ENCODE measurements at regions of chr13 and their contacts with region 1.

Region 1: DNA sequence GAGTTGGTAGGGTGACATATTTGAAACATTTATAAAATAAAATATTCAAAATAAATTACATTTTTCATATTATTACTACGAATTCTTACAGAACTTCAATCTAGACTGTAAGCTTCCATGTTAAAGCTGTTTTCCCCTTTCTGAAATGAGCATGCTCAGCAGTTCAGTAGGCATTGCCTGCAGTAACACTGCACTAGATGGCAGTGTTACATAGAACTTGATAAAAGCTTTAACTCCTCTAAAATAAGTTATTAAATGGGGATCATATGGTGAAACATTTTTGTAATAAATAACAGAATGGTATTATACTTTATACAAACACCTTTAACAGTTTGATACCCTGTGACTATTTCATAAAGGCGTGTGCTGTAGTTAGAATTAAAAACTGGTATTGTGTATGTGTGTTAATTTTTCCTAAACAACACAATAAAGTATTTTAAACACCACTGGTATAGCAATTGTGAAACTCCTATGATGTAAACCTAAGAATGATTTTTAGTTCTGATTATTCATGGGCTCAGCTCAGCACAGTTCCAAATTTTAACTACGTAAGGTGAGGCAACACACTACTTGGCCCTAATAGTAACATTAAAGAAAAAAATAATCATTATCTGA is 11.6 kb upstream of the GPR18 start:
- DNase-seq: peak; percentile 57 to 71 (median 63)
- H3K4me3 ChIP-seq: no peak overlapping the region
- H3K4me3 Mint-ChIP-seq: peak overlapping the region in 2 of 8 donors; percentile 53 to 67
- H3K27ac ChIP-seq: peak overlapping the region; percentile 42
- H3K27ac Mint-ChIP-seq: peak overlapping the region; percentile 23 to 98 (median 92)
- H3K4me1 ChIP-seq: peaks cover 59% of the 10 kb centered on the region
- H3K4me1 Mint-ChIP-seq: peaks cover 43 to 72% (median 58%) of the 10 kb centered on the region in 4 donors
- H3K27me3 ChIP-seq: no peaks in the 10 kb centered on the region
- H3K27me3 Mint-ChIP-seq: no peaks in the 10 kb centered on the region

Region 2: GRCh38 chr13:97539651-97540610 is 1729.8 kb before region 1 on chr13:
- CTCF ChIA-PET with region 1: no interaction called
- POLR2A ChIA-PET with region 1: no interaction called
- intact Hi-C with region 1: no loop called
- DNase-seq: no peak
- H3K4me3 ChIP-seq: no peak overlapping the region
- H3K4me3 Mint-ChIP-seq: no peak overlapping the region
- H3K27ac ChIP-seq: no peak overlapping the region
- H3K27ac Mint-ChIP-seq: no peak overlapping the region
- H3K4me1 ChIP-seq: no peaks in the 10 kb centered on the region
- H3K4me1 Mint-ChIP-seq: no peaks in the 10 kb centered on the region
- H3K27me3 ChIP-seq: no peaks in the 10 kb centered on the region
- H3K27me3 Mint-ChIP-seq: peaks cover 1% of the 10 kb centered on the region in 2 donors

Region 3: GRCh38 chr13:99035715-99036114 is 234.0 kb before region 1 on chr13:
- CTCF ChIA-PET with region 1: no interaction called
- POLR2A ChIA-PET with region 1: no interaction called
- intact Hi-C with region 1: no loop called
- DNase-seq: no peak
- H3K4me3 ChIP-seq: no peak overlapping the region
- H3K4me3 Mint-ChIP-seq: peak overlapping the region in 1 of 8 donors; percentile 3
- H3K27ac ChIP-seq: no peak overlapping the region
- H3K27ac Mint-ChIP-seq: peak overlapping the region in 1 of 7 donors; percentile 30
- H3K4me1 ChIP-seq: peaks cover 25% of the 10 kb centered on the region
- H3K4me1 Mint-ChIP-seq: peaks cover 28 to 72% (median 49%) of the 10 kb centered on the region in 4 donors
- H3K27me3 ChIP-seq: no peaks in the 10 kb centered on the region
- H3K27me3 Mint-ChIP-seq: no peaks in the 10 kb centered on the region

Region 4: DNA sequence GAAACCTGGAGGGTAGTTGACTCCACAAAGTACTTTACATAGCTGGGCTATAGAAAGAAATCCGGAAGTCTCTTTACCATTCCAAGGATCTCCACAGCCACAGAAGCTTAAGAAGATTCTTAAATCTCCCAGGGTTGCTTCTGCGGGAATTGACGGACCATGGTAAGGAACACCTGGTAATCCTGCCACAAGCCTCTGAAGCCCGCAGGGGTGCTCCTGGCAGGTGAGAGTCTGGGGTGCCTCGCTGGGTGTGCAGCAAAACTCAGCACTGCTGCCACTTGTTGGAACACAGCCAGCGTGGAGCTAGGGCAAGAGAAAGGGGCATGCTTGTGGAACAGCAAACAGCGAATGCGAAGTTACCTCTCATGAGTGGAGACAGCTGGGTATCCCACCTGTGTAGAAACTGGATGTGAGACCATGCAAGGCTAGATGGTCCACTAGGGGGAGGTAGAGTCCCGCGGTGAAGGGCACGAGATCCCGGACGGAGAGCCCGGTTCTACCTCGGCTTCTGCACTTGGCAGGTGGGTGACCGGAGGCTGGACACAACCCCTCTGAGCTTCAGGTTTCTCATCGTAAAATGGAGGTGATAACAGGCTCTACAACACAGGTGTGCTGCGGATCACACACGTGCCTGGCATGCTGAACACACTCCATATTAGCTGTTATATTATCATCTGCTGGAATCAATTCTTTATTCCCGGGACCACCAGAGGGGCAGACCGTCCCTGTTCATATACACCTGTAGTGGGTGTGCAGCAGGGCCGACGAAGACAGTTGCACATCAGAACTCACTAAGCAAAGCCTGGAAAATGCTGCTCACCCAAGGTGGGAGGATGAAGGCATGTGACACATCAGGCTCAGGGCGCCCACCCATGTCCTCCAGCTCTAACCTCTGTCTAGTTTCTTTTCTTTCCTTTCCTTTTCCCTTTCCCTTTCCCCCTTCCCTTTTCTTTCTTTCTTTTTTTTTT is 93.1 kb before region 1 on chr13:
- CTCF ChIA-PET with region 1: interaction called, 567 read pairs
- POLR2A ChIA-PET with region 1: interaction called, 12 read pairs
- intact Hi-C with region 1: loop called (anchors 1 kb)
- DNase-seq: peak; percentile 69 to 79 (median 75)
- H3K4me3 ChIP-seq: peak overlapping the region in 1 of 2 donors; percentile 19
- H3K4me3 Mint-ChIP-seq: peak overlapping the region in 7 of 8 donors; percentile 62 to 80 (median 71)
- H3K27ac ChIP-seq: no peak overlapping the region
- H3K27ac Mint-ChIP-seq: peak overlapping the region in 6 of 7 donors; percentile 37 to 81 (median 68)
- H3K4me1 ChIP-seq: peaks cover 44% of the 10 kb centered on the region
- H3K4me1 Mint-ChIP-seq: peaks cover 32 to 43% (median 36%) of the 10 kb centered on the region in 4 donors
- H3K27me3 ChIP-seq: no peaks in the 10 kb centered on the region
- H3K27me3 Mint-ChIP-seq: no peaks in the 10 kb centered on the region

Region 5: DNA sequence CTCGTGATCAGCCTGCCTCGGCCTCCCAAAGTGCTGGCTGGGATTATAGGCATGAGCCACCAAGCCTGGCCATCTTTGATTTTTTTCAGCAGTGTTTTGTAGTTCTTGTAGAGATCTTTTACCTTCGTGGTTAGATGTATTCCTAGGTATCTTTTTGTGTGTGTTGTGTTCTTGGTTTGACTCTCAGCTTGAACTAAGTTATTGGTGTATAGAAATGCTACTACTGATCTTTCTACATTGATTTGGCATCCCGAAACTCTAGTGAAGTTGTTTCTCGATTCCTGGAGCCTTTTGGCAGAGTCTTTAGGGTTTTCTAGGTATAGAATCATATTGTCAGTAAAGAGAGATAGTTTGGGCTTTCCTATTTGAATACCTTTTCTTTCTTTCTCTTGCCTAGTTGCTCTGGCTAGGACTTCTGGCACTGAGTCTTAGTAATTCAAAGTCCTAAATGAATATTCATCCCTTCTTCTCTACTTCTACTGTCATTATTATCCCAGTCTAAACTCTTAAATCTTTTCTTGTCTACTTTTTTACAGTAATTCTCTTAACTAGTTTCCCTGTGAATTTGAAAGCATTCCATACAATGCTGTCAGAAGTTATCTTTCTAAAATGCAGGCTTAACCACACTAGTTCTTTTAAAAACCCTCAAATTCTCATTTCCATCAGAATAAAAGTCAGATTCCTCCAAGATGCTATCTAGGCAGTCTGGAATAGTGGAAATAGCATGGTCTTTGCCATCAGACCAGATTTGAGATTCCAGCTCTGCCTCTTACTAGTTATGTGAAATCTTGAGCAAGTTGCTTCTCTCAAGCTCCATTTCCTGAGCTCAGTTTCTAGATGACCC is 18.5 kb before region 1 on chr13:
- CTCF ChIA-PET with region 1: interaction called, 10 read pairs
- POLR2A ChIA-PET with region 1: interaction called, 3 read pairs
- intact Hi-C with region 1: no loop called
- DNase-seq: no peak
- H3K4me3 ChIP-seq: no peak overlapping the region
- H3K4me3 Mint-ChIP-seq: peak overlapping the region in 5 of 8 donors; percentile 9 to 71 (median 36)
- H3K27ac ChIP-seq: no peak overlapping the region
- H3K27ac Mint-ChIP-seq: peak overlapping the region; percentile 63 to 87 (median 77)
- H3K4me1 ChIP-seq: peaks cover 37% of the 10 kb centered on the region
- H3K4me1 Mint-ChIP-seq: peaks cover 41 to 64% (median 50%) of the 10 kb centered on the region in 4 donors
- H3K27me3 ChIP-seq: no peaks in the 10 kb centered on the region
- H3K27me3 Mint-ChIP-seq: no peaks in the 10 kb centered on the region

Region 6: DNA sequence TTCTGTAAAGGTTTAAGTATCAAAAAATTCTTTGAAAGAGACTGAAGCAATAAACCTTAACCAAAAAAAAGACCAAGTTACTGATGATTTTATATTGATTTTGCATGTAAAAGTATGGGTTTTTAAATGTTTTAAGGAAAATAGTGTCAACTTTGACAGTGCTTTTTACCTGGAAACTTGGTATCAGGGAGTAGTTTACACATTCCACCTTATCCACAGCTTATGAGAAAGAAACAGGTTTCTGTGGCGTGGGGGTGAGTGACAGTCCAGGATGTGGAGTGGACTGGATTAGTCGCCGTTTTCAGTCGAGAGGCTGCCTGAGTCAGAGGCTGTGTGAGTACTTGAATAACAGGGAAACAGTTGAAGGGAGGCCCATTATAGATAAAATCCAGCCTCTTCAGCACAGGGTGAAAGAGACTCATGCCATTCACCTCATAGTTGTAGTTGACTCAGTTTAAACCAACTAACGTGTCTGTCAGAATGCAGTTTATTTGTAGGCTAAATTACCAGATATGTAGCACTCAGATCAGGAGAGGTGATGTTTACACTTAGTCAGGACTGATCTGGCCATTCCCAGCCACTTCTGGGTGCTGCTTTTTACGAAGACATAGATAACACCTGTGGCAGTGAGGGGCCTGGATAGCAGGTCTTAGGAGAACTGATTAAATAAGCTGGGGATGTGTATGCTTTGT is 38.1 kb after region 1 on chr13:
- CTCF ChIA-PET with region 1: interaction called, 217 read pairs
- POLR2A ChIA-PET with region 1: interaction called, 349 read pairs
- intact Hi-C with region 1: loop called (anchors 5 kb)
- DNase-seq: peak in 2 of 5 donors; percentile 49 to 83
- H3K4me3 ChIP-seq: peak overlapping the region; percentile 47 to 78
- H3K4me3 Mint-ChIP-seq: peak overlapping the region; percentile 88 to 100 (median 99)
- H3K27ac ChIP-seq: peak overlapping the region; percentile 77
- H3K27ac Mint-ChIP-seq: peak overlapping the region; percentile 88 to 99 (median 96)
- H3K4me1 ChIP-seq: peaks cover 71% of the 10 kb centered on the region
- H3K4me1 Mint-ChIP-seq: peaks cover 48 to 82% (median 58%) of the 10 kb centered on the region in 4 donors
- H3K27me3 ChIP-seq: no peaks in the 10 kb centered on the region
- H3K27me3 Mint-ChIP-seq: no peaks in the 10 kb centered on the region

Region 7: GRCh38 chr13:99356158-99357091 is 86.7 kb after region 1 on chr13:
- CTCF ChIA-PET with region 1: interaction called, 42 read pairs
- POLR2A ChIA-PET with region 1: interaction called, 55 read pairs
- intact Hi-C with region 1: no loop called
- DNase-seq: peak; percentile 88 to 95 (median 92)
- H3K4me3 ChIP-seq: peak overlapping the region; percentile 13 to 37
- H3K4me3 Mint-ChIP-seq: peak overlapping the region; percentile 30 to 82 (median 73)
- H3K27ac ChIP-seq: peak overlapping the region; percentile 94
- H3K27ac Mint-ChIP-seq: peak overlapping the region; percentile 96 to 100 (median 99)
- H3K4me1 ChIP-seq: peaks cover 98% of the 10 kb centered on the region
- H3K4me1 Mint-ChIP-seq: peaks cover 90 to 100% (median 96%) of the 10 kb centered on the region in 4 donors
- H3K27me3 ChIP-seq: no peaks in the 10 kb centered on the region
- H3K27me3 Mint-ChIP-seq: no peaks in the 10 kb centered on the region

Region 8: GRCh38 chr13:99425485-99426341 is 156.0 kb after region 1 on chr13:
- CTCF ChIA-PET with region 1: interaction called, 22 read pairs
- POLR2A ChIA-PET with region 1: interaction called, 6 read pairs
- intact Hi-C with region 1: no loop called
- DNase-seq: peak; percentile 41 to 67 (median 49)
- H3K4me3 ChIP-seq: peak overlapping the region; percentile 14 to 34
- H3K4me3 Mint-ChIP-seq: peak overlapping the region; percentile 23 to 88 (median 82)
- H3K27ac ChIP-seq: peak overlapping the region; percentile 60
- H3K27ac Mint-ChIP-seq: peak overlapping the region; percentile 90 to 96 (median 93)
- H3K4me1 ChIP-seq: peaks cover 42% of the 10 kb centered on the region
- H3K4me1 Mint-ChIP-seq: peaks cover 29 to 59% (median 44%) of the 10 kb centered on the region in 4 donors
- H3K27me3 ChIP-seq: no peaks in the 10 kb centered on the region
- H3K27me3 Mint-ChIP-seq: no peaks in the 10 kb centered on the region

Region 9: GRCh38 chr13:99782669-99783068 is 512.9 kb after region 1 on chr13:
- CTCF ChIA-PET with region 1: no interaction called
- POLR2A ChIA-PET with region 1: no interaction called
- intact Hi-C with region 1: no loop called
- DNase-seq: no peak
- H3K4me3 ChIP-seq: no peak overlapping the region
- H3K4me3 Mint-ChIP-seq: no peak overlapping the region
- H3K27ac ChIP-seq: no peak overlapping the region
- H3K27ac Mint-ChIP-seq: no peak overlapping the region
- H3K4me1 ChIP-seq: no peaks in the 10 kb centered on the region
- H3K4me1 Mint-ChIP-seq: no peaks in the 10 kb centered on the region
- H3K27me3 ChIP-seq: no peaks in the 10 kb centered on the region
- H3K27me3 Mint-ChIP-seq: no peaks in the 10 kb centered on the region

Region 10: DNA sequence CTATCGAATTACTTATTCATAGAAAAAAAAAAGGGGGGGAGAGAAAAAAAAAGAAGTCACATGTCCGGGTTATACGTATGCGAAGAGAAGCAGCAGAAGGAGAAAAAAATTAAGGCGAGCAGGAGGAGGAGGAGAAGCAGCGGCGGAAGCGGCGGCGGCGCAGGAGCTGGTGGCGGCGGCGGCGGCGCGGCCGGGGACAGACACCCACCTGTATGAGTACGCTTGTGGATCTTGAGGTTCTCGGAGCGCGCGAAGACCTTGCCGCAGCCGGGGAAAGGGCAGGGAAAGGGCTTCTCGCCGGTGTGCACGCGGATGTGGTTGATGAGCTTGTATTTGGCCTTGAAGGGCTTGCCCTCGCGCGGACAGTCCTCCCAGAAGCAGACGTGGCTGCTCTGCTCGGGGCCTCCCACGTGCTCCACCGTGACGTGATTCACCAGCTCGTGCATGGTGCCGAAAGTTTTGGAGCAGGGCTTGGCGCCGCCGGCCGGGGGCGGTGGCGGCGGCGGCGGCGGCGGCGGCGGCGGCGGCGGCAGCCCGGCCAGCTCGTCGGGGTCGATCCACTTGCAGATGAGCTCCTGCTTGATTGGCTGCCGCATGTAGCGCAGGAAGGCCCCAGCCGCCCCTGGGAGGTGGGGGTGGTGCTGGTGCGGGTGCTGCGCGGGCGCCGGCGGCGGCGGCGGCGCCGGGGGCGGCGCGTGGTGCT is 700.3 kb after region 1 on chr13:
- CTCF ChIA-PET with region 1: no interaction called
- POLR2A ChIA-PET with region 1: no interaction called
- intact Hi-C with region 1: no loop called
- DNase-seq: peak in 3 of 5 donors; percentile 45 to 64 (median 54)
- H3K4me3 ChIP-seq: peak overlapping the region in 1 of 2 donors; percentile 38
- H3K4me3 Mint-ChIP-seq: peak overlapping the region; percentile 73 to 89 (median 84)
- H3K27ac ChIP-seq: no peak overlapping the region
- H3K27ac Mint-ChIP-seq: peak overlapping the region in 5 of 7 donors; percentile 8 to 93 (median 89)
- H3K4me1 ChIP-seq: peaks cover 32% of the 10 kb centered on the region
- H3K4me1 Mint-ChIP-seq: peaks cover 10 to 44% (median 20%) of the 10 kb centered on the region in 4 donors
- H3K27me3 ChIP-seq: peaks cover 72% of the 10 kb centered on the region
- H3K27me3 Mint-ChIP-seq: peaks cover 64 to 68% of the 10 kb centered on the region in 2 donors

Measured in CD4-positive, alpha-beta memory T cell (primary cell).